ENCODE measurements at regions of chr1 and their contacts with region 1.

Region 1: GRCh38 chr1:150464422-150464826 is 22.8 kb upstream of the TARS2 start:
- DNase-seq: peak; percentile 34 to 60
- H3K4me3 ChIP-seq: no peak overlapping the region
- H3K27ac ChIP-seq: no peak overlapping the region
- H3K4me1 ChIP-seq: no peaks in the 10 kb centered on the region
- H3K27me3 ChIP-seq: no peaks in the 10 kb centered on the region
- CTCF ChIP-seq: peak; percentile 72 to 82 (median 76)
- POLR2A ChIP-seq: no peak

Region 2: GRCh38 chr1:150537732-150538684 is 73.6 kb after region 1 on chr1:
- intact Hi-C with region 1: loop called (anchors 10 kb)
- DNase-seq: peak in 1 of 2 donors; percentile 39
- H3K4me3 ChIP-seq: no peak overlapping the region
- H3K27ac ChIP-seq: peak overlapping the region in 1 of 2 donors; percentile 64
- H3K4me1 ChIP-seq: peaks cover 0 to 1% of the 10 kb centered on the region in 2 donors
- H3K27me3 ChIP-seq: no peaks in the 10 kb centered on the region
- CTCF ChIP-seq: no peak
- POLR2A ChIP-seq: no peak